ENCODE measurements at regions of chr17 and their contacts with region 1.

Region 1: GRCh38 chr17:49567871-49568694 is 7.6 kb upstream of the NXPH3 start:
- DNase-seq: peak; percentile 90
- H3K4me3 ChIP-seq: peak overlapping the region; percentile 59
- H3K27ac ChIP-seq: peak overlapping the region; percentile 83
- H3K4me1 ChIP-seq: peaks cover 42% of the 10 kb centered on the region
- H3K27me3 ChIP-seq: no peaks in the 10 kb centered on the region
- CTCF ChIP-seq: peak; percentile 93

Region 2: GRCh38 chr17:49677933-49678847 is 110.1 kb after region 1 on chr17 and contains the start of gene SPOP:
- intact Hi-C with region 1: no loop called
- DNase-seq: peak; percentile 99
- H3K4me3 ChIP-seq: peak within 1 kb of the TSS; percentile 78
- H3K27ac ChIP-seq: peak within 1 kb of the TSS; percentile 96
- H3K4me1 ChIP-seq: peaks cover 46% of the 10 kb centered on the region
- H3K27me3 ChIP-seq: no peaks in the 10 kb centered on the region
- CTCF ChIP-seq: no peak
- total RNA-seq, gene SPOP: 66.9 TPM

Region 3: DNA sequence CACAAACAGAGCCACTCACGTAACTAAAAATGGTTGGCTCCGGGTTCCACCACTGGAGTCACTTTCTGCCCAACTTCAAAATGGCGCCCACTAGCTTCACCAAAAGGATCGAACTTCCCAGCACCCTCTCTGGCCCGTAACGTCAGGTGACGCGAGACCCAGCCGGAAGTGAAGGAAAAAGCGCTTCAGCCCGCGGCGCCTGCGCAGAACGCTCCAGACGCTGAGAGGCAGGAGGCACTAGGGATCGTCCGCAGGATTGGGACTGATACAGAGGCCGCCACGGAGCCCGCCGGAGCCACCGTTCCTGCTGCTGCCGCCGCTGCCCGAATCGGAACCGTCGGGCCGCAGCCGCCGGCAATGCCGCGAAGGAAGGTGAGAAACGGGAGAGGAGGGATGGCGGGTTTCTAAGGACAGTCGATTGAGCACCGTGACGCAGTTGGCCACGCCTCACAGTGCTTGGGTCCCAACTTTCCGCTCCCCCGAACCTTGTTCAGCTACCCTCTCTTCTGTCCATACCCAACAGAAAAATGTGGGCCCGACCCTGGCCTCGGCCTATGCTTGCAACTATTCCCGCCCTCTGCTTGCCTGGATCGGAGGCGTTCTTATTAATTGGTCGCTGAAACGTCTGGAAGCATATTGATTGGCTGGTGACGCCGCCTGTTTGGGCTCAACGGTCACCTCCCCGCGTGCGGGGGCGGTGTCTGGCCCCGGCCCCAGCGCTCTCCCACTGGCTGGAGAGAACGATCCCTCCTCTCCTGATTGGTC is 220.6 kb after region 1 on chr17 and contains the start of gene KAT7:
- intact Hi-C with region 1: loop called (anchors 10 kb)
- DNase-seq: peak; percentile 99
- H3K4me3 ChIP-seq: peak within 1 kb of the TSS; percentile 96
- H3K27ac ChIP-seq: peak within 1 kb of the TSS; percentile 100
- H3K4me1 ChIP-seq: peaks cover 76% of the 10 kb centered on the region
- H3K27me3 ChIP-seq: no peaks in the 10 kb centered on the region
- CTCF ChIP-seq: no peak
- total RNA-seq, gene KAT7: 52.6 TPM

Region 4: GRCh38 chr17:49843774-49844350 is 275.8 kb after region 1 on chr17:
- intact Hi-C with region 1: loop called (anchors 10 kb)
- DNase-seq: no peak
- H3K4me3 ChIP-seq: no peak overlapping the region
- H3K27ac ChIP-seq: peak overlapping the region; percentile 82
- H3K4me1 ChIP-seq: peaks cover 48% of the 10 kb centered on the region
- H3K27me3 ChIP-seq: no peaks in the 10 kb centered on the region
- CTCF ChIP-seq: peak; percentile 29